ENCODE measurements at regions of chr10 and their contacts with region 1.

Region 1: GRCh38 chr10:69222157-69223027 is 2.3 kb downstream of the HKDC1 start:
- DNase-seq: peak; percentile 96
- ATAC-seq: peak; percentile 92
- H3K4me3 Mint-ChIP-seq: peak overlapping the region; percentile 51
- H3K27ac Mint-ChIP-seq: peak overlapping the region; percentile 95
- H3K4me1 Mint-ChIP-seq: peaks cover 57% of the 10 kb centered on the region
- H3K27me3 Mint-ChIP-seq: no peaks in the 10 kb centered on the region

Region 2: GRCh38 chr10:69202332-69202731 is 20.1 kb before region 1 on chr10:
- CTCF ChIA-PET with region 1: interaction called, 65 read pairs
- DNase-seq: no peak
- ATAC-seq: peak; percentile 40
- H3K4me3 Mint-ChIP-seq: peak overlapping the region; percentile 18
- H3K27ac Mint-ChIP-seq: peak overlapping the region; percentile 80
- H3K4me1 Mint-ChIP-seq: peaks cover 66% of the 10 kb centered on the region
- H3K27me3 Mint-ChIP-seq: no peaks in the 10 kb centered on the region

Region 3: DNA sequence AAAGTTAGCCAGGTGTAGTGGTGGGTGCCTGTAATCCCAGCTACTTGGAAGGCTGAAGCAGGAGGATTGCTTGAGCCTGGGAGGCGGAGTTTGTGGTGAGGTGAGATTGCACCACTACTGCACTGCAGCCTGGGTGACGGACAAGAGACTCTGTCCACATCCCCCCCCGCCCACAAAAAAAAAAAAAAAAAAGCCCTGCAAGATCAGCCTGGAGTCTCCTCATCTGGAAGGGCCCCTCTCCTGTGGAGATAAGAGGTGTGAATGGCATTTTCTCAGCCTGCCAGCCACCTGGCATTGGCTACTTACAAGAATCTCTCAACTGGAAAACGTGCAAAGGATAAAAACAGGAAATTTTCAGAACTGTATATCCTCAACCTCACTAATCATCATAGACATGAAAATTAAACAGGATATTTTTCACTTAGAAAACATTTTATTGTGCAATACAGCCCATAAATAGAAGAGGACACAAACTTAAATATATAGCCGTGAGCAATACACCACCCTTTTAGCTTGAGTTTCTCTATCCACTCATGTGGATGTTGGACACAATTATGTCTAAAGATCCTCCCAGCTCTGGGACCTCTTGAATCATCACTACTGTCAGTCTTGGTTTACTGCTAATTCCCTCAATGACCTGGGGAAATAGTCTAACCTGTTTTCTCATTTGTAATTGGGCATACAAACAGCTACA is 217.6 kb after region 1 on chr10:
- CTCF ChIA-PET with region 1: no interaction called
- DNase-seq: no peak
- ATAC-seq: no peak
- H3K4me3 Mint-ChIP-seq: no peak overlapping the region
- H3K27ac Mint-ChIP-seq: no peak overlapping the region
- H3K4me1 Mint-ChIP-seq: no peaks in the 10 kb centered on the region
- H3K27me3 Mint-ChIP-seq: peaks cover 32% of the 10 kb centered on the region

Measured in activated CD8-positive, alpha-beta memory T cell treated with anti-CD3 and anti-CD28 coated beads, Interleukin-2, amount 10 ng/mL, durations not matched to agents 7 days and 5 days (primary cell).